ENCODE measurements at regions of chr17 and their contacts with region 1.

Region 1: DNA sequence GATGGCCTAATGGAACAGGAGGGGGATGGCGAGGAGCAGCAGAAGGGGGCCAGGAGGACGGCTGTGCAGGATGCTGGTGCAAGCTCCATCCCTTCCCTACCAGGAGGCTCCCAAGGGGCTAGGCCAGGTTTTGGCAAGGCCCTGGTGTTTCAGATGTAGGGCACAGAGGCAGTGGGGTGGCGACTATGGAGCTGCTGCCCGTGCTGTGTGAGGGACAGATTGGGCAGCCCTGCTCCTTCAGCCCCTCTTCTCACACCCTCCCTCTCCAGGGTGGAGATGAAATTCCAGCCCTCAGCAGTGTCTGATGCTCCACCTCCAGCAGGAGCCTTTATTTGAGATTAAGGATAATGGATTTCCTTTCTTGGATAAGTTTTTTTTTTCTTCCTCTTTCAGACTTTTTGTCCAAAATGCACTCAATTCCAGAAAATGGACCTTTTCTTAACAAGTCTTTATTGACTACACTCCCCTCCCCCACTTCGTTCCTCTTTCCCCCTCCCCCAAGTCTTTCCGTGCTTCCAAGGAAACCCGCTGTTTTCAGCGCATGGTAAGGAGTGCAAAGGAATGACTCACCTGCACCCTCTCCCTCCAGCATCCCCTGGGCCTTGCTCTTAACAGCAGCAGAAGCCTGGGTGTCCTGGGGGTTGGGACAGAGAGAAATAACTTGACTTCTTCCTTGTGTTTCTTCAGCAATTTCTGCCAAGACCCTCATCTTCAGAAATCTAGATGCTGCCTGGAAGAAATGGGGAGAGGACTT is 95.2 kb downstream of the CCDC182 start:
- DNase-seq: no peak
- H3K4me3 ChIP-seq: no peak overlapping the region
- H3K27ac ChIP-seq: no peak overlapping the region
- H3K4me1 ChIP-seq: no peaks in the 10 kb centered on the region
- H3K27me3 ChIP-seq: no peaks in the 10 kb centered on the region
- CTCF ChIP-seq: no peak

Region 2: GRCh38 chr17:57444682-57445435 is 205.0 kb before region 1 on chr17:
- CTCF ChIA-PET with region 1: interaction called, 10 read pairs
- POLR2A ChIA-PET with region 1: no interaction called
- intact Hi-C with region 1: no loop called
- DNase-seq: no peak
- H3K4me3 ChIP-seq: no peak overlapping the region
- H3K27ac ChIP-seq: no peak overlapping the region
- H3K4me1 ChIP-seq: peaks cover 45% of the 10 kb centered on the region
- H3K27me3 ChIP-seq: no peaks in the 10 kb centered on the region
- CTCF ChIP-seq: no peak

Measured in A673 (cell line).